ENCODE measurements at regions of chr9 and their contacts with region 1.

Region 1: GRCh38 chr9:86329649-86330048 is 24.6 kb downstream of the TUT7 start:
- DNase-seq: no peak
- H3K4me3 ChIP-seq: no peak overlapping the region
- H3K27ac ChIP-seq: no peak overlapping the region
- H3K4me1 ChIP-seq: peaks cover 4% of the 10 kb centered on the region
- H3K27me3 ChIP-seq: no peaks in the 10 kb centered on the region
- CTCF ChIP-seq: no peak
- EP300 ChIP-seq: no peak
- POLR2A ChIP-seq: no peak

Region 2: DNA sequence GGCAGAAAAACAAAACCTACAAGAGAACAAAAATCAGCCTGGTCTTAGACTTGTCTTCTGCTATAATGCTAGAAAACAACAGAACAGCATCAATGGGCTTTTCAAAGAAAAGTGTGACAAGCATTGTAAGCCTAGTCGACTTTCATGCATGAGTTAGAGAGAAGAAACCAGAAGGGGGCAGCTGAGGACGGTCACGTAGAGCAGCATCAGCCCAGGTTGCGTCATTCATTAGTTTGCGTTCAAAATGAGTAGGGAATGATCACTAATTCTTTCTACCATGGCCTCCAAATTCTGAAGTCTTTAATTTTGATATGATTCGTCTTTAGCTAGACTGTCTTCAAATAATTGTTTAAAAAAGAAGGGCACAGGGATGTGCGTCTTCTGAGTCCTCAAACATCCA is 42.6 kb before region 1 on chr9:
- intact Hi-C with region 1: loop called in 1 of 4 experiments (anchors 5 kb)
- DNase-seq: peak in 2 of 5 donors; percentile 24 to 42
- H3K4me3 ChIP-seq: no peak overlapping the region
- H3K27ac ChIP-seq: no peak overlapping the region
- H3K4me1 ChIP-seq: no peaks in the 10 kb centered on the region
- H3K27me3 ChIP-seq: no peaks in the 10 kb centered on the region
- CTCF ChIP-seq: no peak
- EP300 ChIP-seq: no peak
- POLR2A ChIP-seq: no peak

Measured in ovary (tissue), 10 donors.